Body of pancreas (tissue), 4 donors: ENCODE measurements at regions of chr9 and their contacts with region 1.

Region 1: GRCh38 chr9:134443168-134444037 is 117.1 kb downstream of the RXRA start:
- DNase-seq: peak; percentile 91 to 98 (median 92)
- ATAC-seq: peak; percentile 93
- H3K4me3 ChIP-seq: no peak overlapping the region
- H3K27ac ChIP-seq: peak overlapping the region; percentile 34 to 59 (median 40)
- H3K4me1 ChIP-seq: peaks cover 24% of the 10 kb centered on the region
- H3K27me3 ChIP-seq: no peaks in the 10 kb centered on the region
- CTCF ChIP-seq: peak; percentile 98 to 99 (median 99)
- POLR2A ChIP-seq: peak in 1 of 3 donors; percentile 16

Region 2: DNA sequence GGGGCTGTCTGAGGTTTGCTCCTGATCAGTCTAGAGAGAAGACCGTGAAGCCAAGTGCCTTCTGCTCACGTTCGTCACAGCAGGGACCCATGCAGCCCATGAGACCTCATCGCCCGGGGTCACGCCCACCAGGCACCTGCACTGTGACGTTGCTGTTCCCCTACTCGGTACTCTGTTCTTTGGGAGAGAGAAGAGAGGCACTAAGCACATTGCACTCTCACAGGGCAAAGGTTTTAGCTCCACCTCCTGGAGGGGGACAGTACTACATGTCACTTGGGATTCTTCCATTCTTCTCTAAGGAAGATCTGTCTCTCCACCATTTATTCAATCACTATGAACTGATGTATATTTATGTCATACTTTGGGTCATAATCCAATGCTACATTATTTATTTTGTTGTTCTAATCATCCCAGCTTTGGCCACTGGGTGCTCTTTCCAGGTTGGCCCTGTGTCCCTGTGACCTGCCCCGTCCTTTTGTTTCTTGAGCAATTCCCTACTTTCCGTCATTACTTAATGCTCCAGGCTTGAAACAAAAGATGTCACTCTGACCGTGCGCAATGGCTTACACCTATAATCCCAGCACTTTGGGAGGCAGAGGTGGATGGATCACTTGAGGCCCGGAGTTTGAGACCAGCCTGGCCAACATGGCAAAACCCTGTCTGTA is 344.1 kb before region 1 on chr9:
- intact Hi-C with region 1: no loop called
- DNase-seq: peak; percentile 53 to 69 (median 62)
- ATAC-seq: peak; percentile 73
- H3K4me3 ChIP-seq: no peak overlapping the region
- H3K27ac ChIP-seq: no peak overlapping the region
- H3K4me1 ChIP-seq: no peaks in the 10 kb centered on the region
- H3K27me3 ChIP-seq: no peaks in the 10 kb centered on the region
- CTCF ChIP-seq: peak; percentile 55 to 79 (median 73)
- POLR2A ChIP-seq: no peak

Region 3: DNA sequence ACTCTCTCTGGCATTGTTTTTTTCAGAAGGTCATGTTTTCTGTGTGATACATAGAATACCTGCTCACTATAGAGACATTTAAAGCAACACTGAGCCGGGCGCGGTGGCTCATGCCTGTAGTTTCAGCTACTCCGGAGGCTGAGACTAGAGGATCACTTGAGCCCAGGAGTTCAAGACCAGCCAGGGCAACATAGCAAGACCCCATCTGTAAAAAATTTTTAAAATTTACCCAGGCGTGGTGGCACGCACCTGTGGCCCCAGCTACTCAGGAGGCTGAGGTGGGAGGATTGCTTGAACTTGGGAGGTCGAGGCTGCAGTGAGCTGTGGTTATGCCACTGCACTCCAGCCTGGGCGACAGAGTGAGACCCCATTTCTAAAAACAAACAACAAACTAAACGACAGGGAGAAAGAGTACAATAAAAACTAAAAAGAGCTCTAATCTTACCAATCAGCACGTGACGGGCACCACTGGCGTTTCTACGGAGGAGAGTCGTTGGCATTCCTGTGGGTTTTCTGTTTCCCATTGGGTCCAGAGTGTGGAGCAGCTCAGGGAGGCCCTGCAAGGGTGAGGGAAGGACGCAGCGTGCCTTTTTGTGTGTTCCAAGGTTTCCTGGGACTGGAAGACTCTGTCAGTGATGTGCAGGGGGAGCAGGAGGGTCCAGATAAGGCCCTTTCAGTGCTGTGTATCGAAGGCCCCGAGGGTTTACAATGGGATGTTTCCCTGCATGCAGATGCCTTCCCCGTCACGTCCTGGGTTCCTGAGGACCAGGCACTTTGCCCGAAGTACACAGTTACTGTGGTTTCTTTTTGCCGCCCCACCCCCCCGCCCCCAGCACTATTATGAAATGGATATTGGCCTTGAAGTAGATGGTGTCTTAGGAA is 271.8 kb before region 1 on chr9:
- intact Hi-C with region 1: loop called (anchors 2 kb)
- DNase-seq: no peak
- ATAC-seq: no peak
- H3K4me3 ChIP-seq: no peak overlapping the region
- H3K27ac ChIP-seq: no peak overlapping the region
- H3K4me1 ChIP-seq: peaks cover 15% of the 10 kb centered on the region
- H3K27me3 ChIP-seq: no peaks in the 10 kb centered on the region
- CTCF ChIP-seq: no peak
- POLR2A ChIP-seq: no peak

Region 4: GRCh38 chr9:134333234-134333873 is 110.0 kb before region 1 on chr9:
- intact Hi-C with region 1: loop called (anchors 5 kb)
- DNase-seq: peak in 3 of 4 donors; percentile 58 to 61 (median 59)
- ATAC-seq: peak; percentile 19
- H3K4me3 ChIP-seq: no peak overlapping the region
- H3K27ac ChIP-seq: peak overlapping the region in 3 of 4 donors; percentile 32 to 52 (median 41)
- H3K4me1 ChIP-seq: peaks cover 99% of the 10 kb centered on the region
- H3K27me3 ChIP-seq: no peaks in the 10 kb centered on the region
- CTCF ChIP-seq: no peak
- POLR2A ChIP-seq: no peak

Region 5: GRCh38 chr9:134544388-134545214 is 101.2 kb after region 1 on chr9:
- intact Hi-C with region 1: no loop called
- DNase-seq: no peak
- ATAC-seq: no peak
- H3K4me3 ChIP-seq: no peak overlapping the region
- H3K27ac ChIP-seq: peak overlapping the region in 1 of 4 donors; percentile 25
- H3K4me1 ChIP-seq: no peaks in the 10 kb centered on the region
- H3K27me3 ChIP-seq: no peaks in the 10 kb centered on the region
- CTCF ChIP-seq: no peak
- POLR2A ChIP-seq: no peak